ENCODE measurements at regions of chr7 and their contacts with region 1.

Region 1: DNA sequence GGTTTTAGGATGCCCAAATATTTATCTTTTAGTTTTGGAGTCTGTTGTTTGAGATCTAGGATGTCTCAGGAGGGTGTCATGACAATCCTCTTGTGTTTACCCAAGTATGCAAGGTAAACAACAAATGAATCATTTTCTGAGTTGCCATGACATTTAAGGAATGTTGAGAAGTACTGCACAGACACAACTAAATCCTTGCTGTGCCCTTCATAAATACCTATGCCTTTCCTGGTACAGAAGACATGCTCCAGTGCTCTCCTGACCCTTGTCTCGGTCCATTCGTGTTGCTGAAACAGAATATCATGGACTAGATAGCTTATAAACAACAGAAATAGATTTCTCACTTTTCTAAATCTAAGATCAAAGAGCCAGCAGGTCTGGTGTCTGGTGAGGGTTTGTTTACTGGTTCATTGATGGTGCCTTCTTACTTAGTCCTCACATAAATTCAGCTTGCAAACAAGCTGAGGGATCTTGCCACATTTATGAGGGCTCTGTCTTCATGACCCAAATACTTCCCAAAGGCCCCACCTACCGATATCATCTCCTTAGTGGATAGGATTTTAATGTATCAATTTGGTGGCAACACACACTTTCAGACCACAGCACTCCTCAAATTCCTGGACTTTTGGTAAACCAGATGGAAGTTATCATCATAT is 341.8 kb upstream of the SEMA3A start:
- DNase-seq: peak; percentile 82
- ATAC-seq: peak; percentile 98
- H3K4me3 ChIP-seq: no peak overlapping the region
- H3K27ac ChIP-seq: peak overlapping the region; percentile 33
- H3K4me1 ChIP-seq: peaks cover 15% of the 10 kb centered on the region
- H3K27me3 ChIP-seq: no peaks in the 10 kb centered on the region
- CTCF ChIP-seq: no peak

Region 2: DNA sequence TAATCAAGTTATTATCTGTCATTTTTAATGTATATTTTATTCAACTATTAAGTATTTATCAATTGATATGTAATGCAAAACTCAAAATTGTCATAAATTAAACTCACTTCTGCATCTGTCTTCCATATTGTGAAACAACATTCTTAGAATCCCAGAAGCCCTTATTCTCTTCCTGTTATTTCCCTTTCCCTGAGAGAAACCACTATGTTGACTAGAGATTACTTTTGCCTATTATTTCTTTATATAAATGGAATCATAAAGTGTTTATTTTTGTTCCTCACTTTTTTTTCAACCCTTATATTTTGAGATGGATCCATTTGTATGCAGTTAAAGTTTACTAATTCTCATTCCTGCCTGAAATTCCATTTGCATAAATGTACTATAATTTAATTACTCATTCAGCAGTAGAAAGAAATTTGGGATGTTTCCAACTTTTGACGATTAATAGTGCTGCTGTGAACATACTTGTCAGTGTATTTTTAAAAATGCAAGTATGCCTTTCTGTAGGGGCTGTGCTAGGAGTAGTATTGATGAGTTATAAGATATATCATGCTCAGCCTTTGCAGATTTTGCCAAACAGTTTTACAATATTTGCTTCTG is 439.3 kb after region 1 on chr7:
- CTCF ChIA-PET with region 1: interaction called, 3 read pairs
- POLR2A ChIA-PET with region 1: interaction called, 10 read pairs
- intact Hi-C with region 1: no loop called
- DNase-seq: no peak
- ATAC-seq: no peak
- H3K4me3 ChIP-seq: no peak overlapping the region
- H3K27ac ChIP-seq: no peak overlapping the region
- H3K4me1 ChIP-seq: no peaks in the 10 kb centered on the region
- H3K27me3 ChIP-seq: no peaks in the 10 kb centered on the region
- CTCF ChIP-seq: no peak

Measured in PC-3 (cell line).